ENCODE measurements at regions of chr22 and their contacts with region 1.

Region 1: GRCh38 chr22:30386960-30387827 is at the start of gene RNF215:
- DNase-seq: peak; percentile 98
- CTCF ChIP-seq: peak; percentile 91

Region 2: GRCh38 chr22:30116362-30117117 is 270.7 kb before region 1 on chr22:
- in situ Hi-C with region 1: loop called (anchors 25 kb)
- DNase-seq: no peak
- CTCF ChIP-seq: no peak

Region 3: GRCh38 chr22:30289134-30289979 is 97.8 kb before region 1 on chr22 and contains the start of gene CASTOR1:
- in situ Hi-C with region 1: loop called (anchors 10 kb)
- DNase-seq: peak; percentile 99
- CTCF ChIP-seq: no peak

Region 4: GRCh38 chr22:30340911-30341685 is 46.1 kb before region 1 on chr22:
- in situ Hi-C with region 1: no loop called
- DNase-seq: no peak
- CTCF ChIP-seq: no peak

Measured in GM13977 (cell line).